CD14-positive monocyte (primary cell): ENCODE measurements at regions of chr11 and their contacts with region 1.

Region 1: GRCh38 chr11:126310228-126310991 is 6.5 kb downstream of the DCPS start:
- DNase-seq: peak; percentile 56 to 70 (median 69)
- H3K4me3 ChIP-seq: peak overlapping the region in 1 of 3 experiments; percentile 12
- H3K4me3 Mint-ChIP-seq: no peak overlapping the region
- H3K27ac ChIP-seq: peak overlapping the region; percentile 74 to 84
- H3K27ac Mint-ChIP-seq: peak overlapping the region; percentile 86 to 95 (median 92)
- H3K4me1 ChIP-seq: peaks cover 41 to 48% of the 10 kb centered on the region in 2 donors
- H3K4me1 Mint-ChIP-seq: peaks cover 50% of the 10 kb centered on the region
- H3K27me3 ChIP-seq: no peaks in the 10 kb centered on the region
- H3K27me3 Mint-ChIP-seq: no peaks in the 10 kb centered on the region
- CTCF ChIP-seq: peak; percentile 91

Region 2: DNA sequence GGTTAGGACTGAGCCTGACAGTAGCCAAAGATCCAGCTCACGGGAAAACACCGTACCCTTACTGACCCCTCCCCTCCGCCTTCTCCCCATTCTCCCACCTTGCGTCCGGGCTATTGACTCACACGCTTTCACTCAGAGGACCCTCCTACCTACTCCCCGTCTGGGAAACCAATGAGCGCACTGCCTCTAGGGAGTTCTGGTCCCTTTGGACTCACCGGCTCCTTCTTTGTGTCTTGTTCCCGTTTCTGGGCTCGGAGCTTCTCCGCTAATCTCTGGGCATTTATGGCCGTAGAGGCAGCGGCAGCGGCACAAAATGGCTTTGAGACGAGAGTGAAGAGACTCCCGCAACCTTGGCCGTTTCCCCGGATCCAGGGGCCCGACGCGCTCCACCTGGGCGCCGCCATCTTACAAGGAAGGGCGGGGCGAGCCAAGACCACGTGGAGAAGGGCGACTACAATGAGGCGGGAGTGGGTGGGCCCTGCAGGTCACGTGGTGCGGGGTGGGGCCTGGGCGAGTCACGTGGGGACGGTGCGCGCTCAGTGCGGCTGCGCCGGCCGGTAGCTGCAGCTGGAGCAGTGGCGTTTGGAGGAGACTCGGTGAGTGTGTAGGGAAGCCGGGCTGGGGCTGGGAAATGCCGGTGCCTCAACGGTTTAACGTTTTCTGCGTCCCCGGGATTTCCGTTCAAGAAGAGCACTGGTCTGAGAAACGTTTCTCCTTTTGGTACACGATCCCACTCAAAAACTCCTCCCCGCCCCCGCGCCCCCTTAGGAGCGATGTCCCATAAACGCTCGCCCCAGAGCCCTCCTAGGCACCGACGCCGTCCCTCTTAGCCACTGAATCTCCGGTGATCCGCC is 98.9 kb before region 1 on chr11 and contains the starts of genes FAM118B and RPUSD4:
- intact Hi-C with region 1: no loop called
- DNase-seq: peak; percentile 93 to 97 (median 95)
- H3K4me3 ChIP-seq: peak within 1 kb of the TSS; percentile 62 to 98 (median 95)
- H3K4me3 Mint-ChIP-seq: peak within 1 kb of the TSS; percentile 97 to 99
- H3K27ac ChIP-seq: peak within 1 kb of the TSS; percentile 31 to 80
- H3K27ac Mint-ChIP-seq: peak within 1 kb of the TSS; percentile 90 to 95 (median 92)
- H3K4me1 ChIP-seq: peaks cover 45 to 47% of the 10 kb centered on the region in 2 donors
- H3K4me1 Mint-ChIP-seq: peaks cover 48% of the 10 kb centered on the region
- H3K27me3 ChIP-seq: no peaks in the 10 kb centered on the region
- H3K27me3 Mint-ChIP-seq: peaks cover 0 to 3% (median 0%) of the 10 kb centered on the region in 3 donors
- CTCF ChIP-seq: no peak
- polyA plus RNA-seq, gene FAM118B: 13.6 to 18.7 (median 16.5) TPM
- polyA plus RNA-seq, gene RPUSD4: 9.0 to 15.5 (median 10.3) TPM

Region 3: GRCh38 chr11:126355324-126355925 is 45.0 kb after region 1 on chr11 and contains the start of gene ST3GAL4:
- intact Hi-C with region 1: loop called in 1 of 2 experiments (anchors 5 kb)
- DNase-seq: peak; percentile 17 to 40 (median 20)
- H3K4me3 ChIP-seq: peak within 1 kb of the TSS; percentile 51 to 81 (median 72)
- H3K4me3 Mint-ChIP-seq: peak within 1 kb of the TSS; percentile 85 to 90
- H3K27ac ChIP-seq: peak within 1 kb of the TSS; percentile 22 to 67
- H3K27ac Mint-ChIP-seq: peak within 1 kb of the TSS in 6 of 7 donors; percentile 40 to 85 (median 56)
- H3K4me1 ChIP-seq: peaks cover 55 to 75% of the 10 kb centered on the region in 2 donors
- H3K4me1 Mint-ChIP-seq: peaks cover 77% of the 10 kb centered on the region
- H3K27me3 ChIP-seq: no peaks in the 10 kb centered on the region
- H3K27me3 Mint-ChIP-seq: peaks cover 0 to 12% (median 2%) of the 10 kb centered on the region in 3 donors
- CTCF ChIP-seq: no peak
- polyA plus RNA-seq, gene ST3GAL4: 7.8 to 14.3 (median 10.1) TPM

Region 4: GRCh38 chr11:126391970-126392639 is 81.7 kb after region 1 on chr11:
- intact Hi-C with region 1: loop called in 1 of 2 experiments (anchors 5 kb)
- DNase-seq: peak; percentile 53 to 81 (median 71)
- H3K4me3 ChIP-seq: peak overlapping the region in 1 of 3 experiments; percentile 37
- H3K4me3 Mint-ChIP-seq: peak overlapping the region; percentile 27 to 62
- H3K27ac ChIP-seq: peak overlapping the region in 1 of 2 donors; percentile 53
- H3K27ac Mint-ChIP-seq: peak overlapping the region in 5 of 7 donors; percentile 5 to 81 (median 73)
- H3K4me1 ChIP-seq: peaks cover 27 to 33% of the 10 kb centered on the region in 2 donors
- H3K4me1 Mint-ChIP-seq: peaks cover 30% of the 10 kb centered on the region
- H3K27me3 ChIP-seq: no peaks in the 10 kb centered on the region
- H3K27me3 Mint-ChIP-seq: peaks cover 0 to 3% (median 2%) of the 10 kb centered on the region in 3 donors
- CTCF ChIP-seq: peak; percentile 55

Region 5: DNA sequence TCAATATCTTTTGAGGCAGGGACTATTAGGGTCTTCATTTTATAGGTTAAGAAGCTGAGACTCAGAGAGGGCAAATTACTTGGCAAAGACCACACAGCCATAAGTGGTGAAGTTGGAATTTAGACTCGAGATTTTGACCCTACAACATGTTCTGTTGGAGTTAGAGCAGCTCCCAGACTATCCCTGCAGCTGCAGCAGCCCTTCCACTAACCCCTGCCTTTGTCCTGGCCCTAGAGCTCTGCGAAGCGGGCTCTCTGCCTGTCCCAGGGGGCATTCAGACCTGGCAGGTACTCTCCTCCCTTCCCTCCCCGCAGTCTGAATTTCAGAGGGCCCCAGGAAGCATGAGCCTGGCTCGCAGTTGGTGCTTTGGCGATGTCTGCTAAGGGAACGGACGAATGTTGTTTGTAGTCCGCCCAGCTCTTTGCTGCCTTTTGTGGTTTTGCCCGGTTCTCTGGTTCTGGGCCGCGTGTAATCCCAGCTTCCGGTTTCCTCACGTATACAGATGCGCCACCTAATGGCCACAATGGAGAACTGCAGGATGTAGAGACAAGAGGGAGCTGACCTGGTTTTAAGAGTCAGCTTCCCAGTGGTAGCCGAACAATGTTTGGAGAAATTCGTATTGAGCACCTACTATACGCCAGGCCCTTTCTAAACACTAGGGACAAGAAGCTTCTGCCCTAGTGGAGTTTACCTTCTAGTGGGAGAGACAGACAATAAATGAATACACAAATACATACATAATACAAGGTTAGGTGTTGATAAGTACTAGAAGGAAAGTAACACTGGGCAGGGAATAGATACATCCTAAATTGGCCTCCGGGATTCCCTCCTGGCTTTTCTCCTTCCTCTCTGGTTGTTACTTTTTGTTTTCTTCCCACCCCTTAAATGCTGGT is 170.2 kb after region 1 on chr11:
- intact Hi-C with region 1: loop called (anchors 2 to 5 kb)
- DNase-seq: peak; percentile 72 to 81 (median 76)
- H3K4me3 ChIP-seq: peak overlapping the region in 1 of 3 experiments; percentile 45
- H3K4me3 Mint-ChIP-seq: peak overlapping the region; percentile 52 to 84
- H3K27ac ChIP-seq: no peak overlapping the region
- H3K27ac Mint-ChIP-seq: peak overlapping the region in 4 of 7 donors; percentile 37 to 53 (median 48)
- H3K4me1 ChIP-seq: peaks cover 13 to 14% of the 10 kb centered on the region in 2 donors
- H3K4me1 Mint-ChIP-seq: peaks cover 18% of the 10 kb centered on the region
- H3K27me3 ChIP-seq: no peaks in the 10 kb centered on the region
- H3K27me3 Mint-ChIP-seq: peaks cover 0 to 7% (median 3%) of the 10 kb centered on the region in 3 donors
- CTCF ChIP-seq: peak; percentile 95